CD4-positive, alpha-beta memory T cell (primary cell): ENCODE measurements at regions of chr10 and their contacts with region 1.

Region 1: DNA sequence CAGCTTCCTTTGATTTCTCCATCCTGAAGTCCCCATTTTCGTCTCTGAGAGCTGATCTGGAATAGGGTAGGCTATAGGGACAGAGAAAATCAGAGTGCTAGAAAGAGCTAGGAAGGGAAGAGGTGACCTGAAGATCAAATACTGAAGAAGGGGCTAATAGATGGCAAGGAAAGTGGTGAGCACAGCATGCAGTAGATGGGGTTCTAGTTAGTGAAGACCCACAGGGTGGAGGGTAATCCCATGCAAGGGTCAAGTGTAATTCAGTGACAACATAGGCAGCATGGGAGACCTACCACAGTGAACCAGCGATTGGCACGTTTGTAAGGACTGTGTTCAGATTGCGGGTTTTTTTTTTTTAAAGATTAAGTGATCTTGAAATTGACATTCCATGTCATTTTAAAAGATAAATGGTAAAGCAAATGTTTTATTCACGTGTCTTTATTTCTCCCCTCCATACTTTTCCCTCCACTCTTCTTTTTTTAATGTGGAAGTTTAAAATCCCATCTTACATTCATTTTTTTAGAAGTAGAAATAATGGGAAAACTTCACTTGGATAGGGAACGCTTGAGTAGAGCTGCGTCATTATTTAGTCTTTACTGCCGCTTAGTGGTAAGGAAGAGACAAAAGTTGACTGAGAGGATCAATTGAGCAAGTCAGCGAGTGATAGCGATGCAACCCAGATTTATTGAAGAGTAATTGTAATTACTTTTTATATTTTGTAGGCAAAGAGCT is 21.0 kb upstream of the ABI1 start:
- DNase-seq: peak in 4 of 5 donors; percentile 34 to 56 (median 43)
- H3K4me3 ChIP-seq: no peak overlapping the region
- H3K4me3 Mint-ChIP-seq: no peak overlapping the region
- H3K27ac ChIP-seq: no peak overlapping the region
- H3K27ac Mint-ChIP-seq: no peak overlapping the region
- H3K4me1 ChIP-seq: no peaks in the 10 kb centered on the region
- H3K4me1 Mint-ChIP-seq: peaks cover 0 to 5% (median 1%) of the 10 kb centered on the region in 4 donors
- H3K27me3 ChIP-seq: no peaks in the 10 kb centered on the region
- H3K27me3 Mint-ChIP-seq: peaks cover 7 to 9% of the 10 kb centered on the region in 2 donors

Region 2: DNA sequence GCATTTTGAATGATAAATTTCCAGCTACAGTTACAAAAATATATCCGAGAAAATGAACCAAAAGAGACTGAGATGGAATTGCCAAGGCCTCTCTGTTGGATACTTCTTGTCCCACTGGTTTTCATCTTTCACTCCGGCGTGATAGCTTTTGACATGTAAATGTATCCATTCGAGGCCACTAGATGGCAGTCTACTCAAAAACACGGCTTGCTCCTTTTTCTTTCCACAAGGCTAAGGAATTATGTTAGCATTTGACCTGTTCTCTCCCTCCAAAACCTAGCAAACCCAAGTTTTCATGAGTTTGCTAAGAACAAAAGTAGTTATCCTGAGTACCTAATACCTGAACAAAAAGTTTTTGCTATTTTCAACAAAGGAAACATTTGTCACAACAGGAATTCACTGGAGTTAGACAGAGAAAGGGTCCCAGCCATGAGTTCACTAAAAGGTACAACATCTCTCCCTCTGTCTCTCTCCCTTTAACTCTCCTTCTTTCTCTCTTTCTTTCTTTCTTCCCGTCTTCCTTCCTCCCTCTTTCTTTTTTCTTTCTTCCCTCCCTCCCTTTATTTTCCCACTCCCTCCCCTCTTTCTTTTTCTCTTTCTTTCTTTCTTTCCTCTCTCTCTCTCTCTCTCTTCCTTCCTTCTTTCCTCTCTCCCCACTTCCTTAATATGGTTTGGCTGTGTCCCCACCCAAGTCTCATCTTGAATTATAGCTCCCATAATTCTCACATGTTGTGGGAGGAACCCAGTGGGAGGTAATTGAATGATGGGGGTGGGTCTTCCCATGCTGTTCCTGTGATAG is 1155.6 kb before region 1 on chr10:
- CTCF ChIA-PET with region 1: no interaction called
- POLR2A ChIA-PET with region 1: no interaction called
- intact Hi-C with region 1: loop called (anchors 10 kb)
- DNase-seq: peak in 4 of 5 donors; percentile 5 to 20 (median 8)
- H3K4me3 ChIP-seq: no peak overlapping the region
- H3K4me3 Mint-ChIP-seq: no peak overlapping the region
- H3K27ac ChIP-seq: no peak overlapping the region
- H3K27ac Mint-ChIP-seq: no peak overlapping the region
- H3K4me1 ChIP-seq: no peaks in the 10 kb centered on the region
- H3K4me1 Mint-ChIP-seq: peaks cover 0 to 4% (median 4%) of the 10 kb centered on the region in 4 donors
- H3K27me3 ChIP-seq: no peaks in the 10 kb centered on the region
- H3K27me3 Mint-ChIP-seq: peaks cover 3 to 7% of the 10 kb centered on the region in 2 donors

Region 3: DNA sequence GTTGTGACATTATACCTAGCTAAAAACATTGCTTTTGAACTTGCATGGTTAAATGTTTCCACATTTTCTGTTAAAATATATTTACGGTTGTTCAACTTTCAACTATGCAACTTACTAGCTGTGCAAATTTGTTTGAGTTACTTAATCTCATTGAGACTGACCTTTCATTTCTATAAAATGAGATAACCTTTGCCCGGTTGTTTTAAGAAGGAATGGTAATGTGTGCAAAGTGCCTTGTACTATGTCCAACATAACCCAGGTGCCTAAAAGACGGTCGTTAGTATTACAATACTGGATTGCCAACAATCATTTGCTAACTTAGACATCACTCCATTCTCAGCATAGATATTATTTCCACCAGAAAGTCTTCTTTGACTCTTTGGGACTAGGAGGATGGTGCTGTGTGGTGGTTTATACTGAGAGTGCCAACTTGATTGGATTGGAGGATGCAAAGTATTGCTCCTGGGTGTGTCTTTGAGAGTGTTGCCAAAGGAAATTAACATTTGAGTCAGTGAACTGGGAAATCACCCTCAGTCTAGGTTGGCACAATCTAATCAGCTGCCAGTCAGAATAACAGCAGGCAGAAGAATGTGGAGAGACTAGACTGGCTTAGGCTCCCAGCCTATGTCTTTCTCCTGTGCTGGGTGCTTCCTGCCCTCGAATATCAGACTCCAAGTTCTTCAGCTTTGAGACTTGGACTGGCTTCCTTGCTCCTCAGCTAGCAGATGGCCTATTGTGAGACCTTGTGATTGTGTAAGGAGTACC is 269.4 kb before region 1 on chr10:
- CTCF ChIA-PET with region 1: interaction called, 5 read pairs
- POLR2A ChIA-PET with region 1: no interaction called
- intact Hi-C with region 1: loop called (anchors 2 kb)
- DNase-seq: no peak
- H3K4me3 ChIP-seq: no peak overlapping the region
- H3K4me3 Mint-ChIP-seq: no peak overlapping the region
- H3K27ac ChIP-seq: no peak overlapping the region
- H3K27ac Mint-ChIP-seq: no peak overlapping the region
- H3K4me1 ChIP-seq: no peaks in the 10 kb centered on the region
- H3K4me1 Mint-ChIP-seq: no peaks in the 10 kb centered on the region
- H3K27me3 ChIP-seq: no peaks in the 10 kb centered on the region
- H3K27me3 Mint-ChIP-seq: peaks cover 9 to 12% of the 10 kb centered on the region in 2 donors

Region 4: DNA sequence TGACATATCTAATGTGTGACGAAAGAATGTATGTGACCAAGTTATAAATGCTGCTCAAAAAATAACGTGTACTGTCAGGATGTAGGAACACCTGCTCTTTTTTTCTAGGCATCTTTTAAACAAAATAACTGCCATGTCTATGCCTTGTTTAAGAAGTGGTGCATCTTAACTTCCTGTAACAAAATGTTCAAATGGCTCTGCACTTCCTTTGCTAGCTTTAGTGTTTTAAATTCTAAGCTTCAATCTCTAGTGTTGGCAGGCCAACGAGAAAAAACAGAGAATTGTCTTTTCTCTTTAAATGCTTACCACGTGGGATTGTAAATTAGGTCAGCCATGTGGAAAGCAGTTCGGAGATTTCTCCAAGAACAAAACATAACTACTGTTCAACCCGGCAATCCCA is 198.8 kb before region 1 on chr10:
- CTCF ChIA-PET with region 1: interaction called, 27 read pairs
- POLR2A ChIA-PET with region 1: no interaction called
- intact Hi-C with region 1: loop called (anchors 2 kb)
- DNase-seq: peak in 4 of 5 donors; percentile 47 to 67 (median 58)
- H3K4me3 ChIP-seq: no peak overlapping the region
- H3K4me3 Mint-ChIP-seq: peak overlapping the region in 6 of 8 donors; percentile 7 to 77 (median 40)
- H3K27ac ChIP-seq: no peak overlapping the region
- H3K27ac Mint-ChIP-seq: peak overlapping the region; percentile 32 to 96 (median 88)
- H3K4me1 ChIP-seq: peaks cover 15% of the 10 kb centered on the region
- H3K4me1 Mint-ChIP-seq: peaks cover 14 to 24% (median 19%) of the 10 kb centered on the region in 4 donors
- H3K27me3 ChIP-seq: no peaks in the 10 kb centered on the region
- H3K27me3 Mint-ChIP-seq: peaks cover 1 to 2% of the 10 kb centered on the region in 2 donors

Region 5: DNA sequence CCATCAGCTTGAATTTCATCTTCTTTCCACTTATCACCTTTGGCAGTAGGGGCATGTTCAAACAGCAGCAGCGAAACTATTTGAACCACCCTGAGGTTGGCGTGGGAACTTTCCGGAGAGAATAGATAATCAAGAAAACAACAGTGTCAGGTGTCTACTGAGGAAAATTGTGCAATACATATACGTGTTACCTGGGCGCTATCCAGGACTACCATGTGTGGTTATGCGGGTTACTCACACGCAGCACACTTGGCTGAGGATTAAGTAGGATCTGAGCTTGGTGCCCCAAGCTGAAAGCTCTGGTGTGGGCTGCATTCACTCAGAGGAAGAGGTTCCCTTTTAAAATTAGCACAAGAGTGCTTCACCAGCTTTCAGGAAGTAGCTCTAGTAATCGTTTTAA is 12.2 kb before region 1 on chr10:
- CTCF ChIA-PET with region 1: interaction called, 19 read pairs
- POLR2A ChIA-PET with region 1: no interaction called
- intact Hi-C with region 1: no loop called
- DNase-seq: peak; percentile 10 to 39 (median 18)
- H3K4me3 ChIP-seq: no peak overlapping the region
- H3K4me3 Mint-ChIP-seq: peak overlapping the region; percentile 0 to 79 (median 60)
- H3K27ac ChIP-seq: no peak overlapping the region
- H3K27ac Mint-ChIP-seq: peak overlapping the region in 6 of 7 donors; percentile 58 to 87 (median 81)
- H3K4me1 ChIP-seq: peaks cover 8% of the 10 kb centered on the region
- H3K4me1 Mint-ChIP-seq: peaks cover 7 to 9% (median 8%) of the 10 kb centered on the region in 4 donors
- H3K27me3 ChIP-seq: no peaks in the 10 kb centered on the region
- H3K27me3 Mint-ChIP-seq: no peaks in the 10 kb centered on the region

Region 6: DNA sequence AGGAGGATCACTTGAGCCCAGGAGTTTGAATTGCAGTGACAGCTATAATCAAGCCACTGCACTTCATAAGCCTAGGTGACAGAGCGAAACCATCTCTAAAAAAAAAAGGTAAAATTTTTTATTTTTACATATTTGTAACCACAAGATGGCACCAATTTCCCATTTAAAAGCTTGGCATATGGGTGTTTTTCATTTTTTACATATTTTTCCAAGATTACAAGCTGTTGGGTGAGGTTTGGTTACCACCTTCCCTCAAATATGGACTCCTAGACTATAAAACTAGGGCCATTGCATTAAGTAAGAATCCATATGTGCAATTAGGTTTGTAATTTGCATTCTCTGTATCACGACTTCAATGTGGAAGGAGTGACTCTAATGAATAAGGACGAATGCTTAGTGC is 488.1 kb after region 1 on chr10:
- CTCF ChIA-PET with region 1: no interaction called
- POLR2A ChIA-PET with region 1: no interaction called
- intact Hi-C with region 1: no loop called
- DNase-seq: peak in 1 of 5 donors; percentile 9
- H3K4me3 ChIP-seq: no peak overlapping the region
- H3K4me3 Mint-ChIP-seq: no peak overlapping the region
- H3K27ac ChIP-seq: no peak overlapping the region
- H3K27ac Mint-ChIP-seq: peak overlapping the region in 2 of 7 donors; percentile 16 to 39
- H3K4me1 ChIP-seq: no peaks in the 10 kb centered on the region
- H3K4me1 Mint-ChIP-seq: no peaks in the 10 kb centered on the region
- H3K27me3 ChIP-seq: no peaks in the 10 kb centered on the region
- H3K27me3 Mint-ChIP-seq: peaks cover 0 to 3% of the 10 kb centered on the region in 2 donors